Activated CD4-positive, alpha-beta T cell treated with anti-CD3 and anti-CD28 coated beads, Interleukin-2, amount 10 ng/mL, durations not matched to agents 24 days and 14 days (primary cell): ENCODE measurements at regions of chr5 and their contacts with region 1.

Region 1: GRCh38 chr5:135887351-135887864 is 8.2 kb downstream of the IL9 start:
- DNase-seq: peak; percentile 89
- H3K4me3 Mint-ChIP-seq: no peak overlapping the region
- H3K27ac Mint-ChIP-seq: no peak overlapping the region
- H3K4me1 Mint-ChIP-seq: peaks cover 5% of the 10 kb centered on the region
- H3K27me3 Mint-ChIP-seq: peaks cover 18% of the 10 kb centered on the region

Region 2: DNA sequence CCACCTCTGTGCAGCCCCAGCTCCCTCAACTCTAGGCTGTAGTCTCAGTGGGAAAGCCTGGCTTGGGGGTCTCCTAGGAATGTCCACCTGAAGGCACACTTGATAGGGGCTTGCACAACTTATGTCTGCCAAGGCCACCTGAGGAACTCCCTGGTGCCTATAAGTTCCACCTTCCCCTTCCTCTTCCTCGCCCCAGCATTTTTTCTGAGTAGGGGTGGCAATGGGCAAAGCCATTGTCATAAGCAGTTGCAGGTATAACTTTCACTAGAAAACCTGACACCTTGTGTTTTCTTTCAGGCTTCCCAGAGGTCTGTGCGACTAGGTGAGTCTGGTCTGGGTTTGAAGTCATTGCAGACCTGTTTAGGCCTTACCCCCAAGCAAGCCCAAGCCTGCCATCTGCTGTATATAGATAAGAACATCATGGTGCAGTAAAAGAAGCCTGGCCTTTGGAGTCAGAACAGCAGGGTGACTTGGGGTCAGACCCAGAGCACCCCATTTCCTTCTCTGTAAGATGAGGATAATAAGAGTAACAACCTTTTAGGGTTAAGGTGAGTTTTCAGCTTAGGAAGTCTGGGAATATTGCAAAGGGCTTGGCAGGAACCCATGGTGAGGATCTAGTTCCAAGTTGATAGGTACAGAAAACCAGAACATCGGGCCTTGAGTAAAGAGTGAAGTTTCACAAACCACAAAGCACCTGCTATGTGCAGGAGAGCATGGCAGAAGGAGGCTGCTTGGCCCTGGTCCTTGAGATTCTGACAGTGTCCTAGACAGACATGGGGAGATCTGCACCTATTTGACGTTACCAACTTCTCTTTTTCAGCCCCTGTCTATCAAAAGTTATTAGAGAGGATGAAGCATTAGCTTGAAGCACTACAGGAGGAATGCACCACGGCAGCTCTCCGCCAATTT is 175.2 kb after region 1 on chr5:
- intact Hi-C with region 1: loop called (anchors 1 kb)
- DNase-seq: peak; percentile 60
- H3K4me3 Mint-ChIP-seq: no peak overlapping the region
- H3K27ac Mint-ChIP-seq: no peak overlapping the region
- H3K4me1 Mint-ChIP-seq: no peaks in the 10 kb centered on the region
- H3K27me3 Mint-ChIP-seq: peaks cover 4% of the 10 kb centered on the region

Region 3: DNA sequence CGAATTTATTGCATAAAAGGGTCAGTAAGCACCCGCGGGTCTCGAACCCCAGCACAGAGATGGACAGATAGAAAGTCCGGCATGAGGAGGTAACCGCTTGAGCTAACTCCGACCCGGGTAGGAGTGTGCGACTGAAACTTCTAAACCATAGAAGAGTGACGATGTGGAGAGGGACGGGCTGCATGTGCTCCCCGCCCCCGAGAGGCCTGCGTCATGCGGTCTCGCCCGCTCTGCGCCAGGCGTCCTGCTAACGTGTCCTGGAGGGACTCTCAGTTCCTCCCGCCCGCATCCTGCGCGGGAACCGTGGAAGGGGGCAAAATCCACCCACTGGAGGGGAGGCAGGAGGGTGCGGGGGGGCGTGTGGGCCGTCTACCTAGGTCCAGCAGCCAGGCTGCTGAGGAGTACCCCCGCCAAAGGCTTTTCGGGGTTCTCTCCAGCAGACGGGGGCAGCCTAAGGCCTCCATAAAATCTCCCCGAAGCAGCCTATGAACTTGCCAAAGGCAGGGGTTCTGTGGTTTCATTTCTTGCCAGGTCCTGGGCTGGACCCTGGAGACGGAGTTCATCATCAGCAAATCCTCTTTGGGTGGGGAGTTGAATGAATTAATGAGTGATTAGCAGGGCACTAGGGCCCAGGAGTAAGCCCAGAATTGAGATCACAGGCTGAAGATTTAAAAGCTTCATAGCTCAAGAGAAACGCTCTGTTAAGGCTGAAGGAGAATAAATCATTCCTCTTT is 193.2 kb after region 1 on chr5:
- intact Hi-C with region 1: loop called (anchors 1 kb)
- DNase-seq: peak; percentile 92
- H3K4me3 Mint-ChIP-seq: peak overlapping the region; percentile 78
- H3K27ac Mint-ChIP-seq: peak overlapping the region; percentile 83
- H3K4me1 Mint-ChIP-seq: peaks cover 12% of the 10 kb centered on the region
- H3K27me3 Mint-ChIP-seq: peaks cover 55% of the 10 kb centered on the region

Region 4: GRCh38 chr5:136174021-136174659 is 286.7 kb after region 1 on chr5:
- intact Hi-C with region 1: loop called (anchors 2 kb)
- DNase-seq: no peak
- H3K4me3 Mint-ChIP-seq: no peak overlapping the region
- H3K27ac Mint-ChIP-seq: no peak overlapping the region
- H3K4me1 Mint-ChIP-seq: no peaks in the 10 kb centered on the region
- H3K27me3 Mint-ChIP-seq: no peaks in the 10 kb centered on the region

Region 5: DNA sequence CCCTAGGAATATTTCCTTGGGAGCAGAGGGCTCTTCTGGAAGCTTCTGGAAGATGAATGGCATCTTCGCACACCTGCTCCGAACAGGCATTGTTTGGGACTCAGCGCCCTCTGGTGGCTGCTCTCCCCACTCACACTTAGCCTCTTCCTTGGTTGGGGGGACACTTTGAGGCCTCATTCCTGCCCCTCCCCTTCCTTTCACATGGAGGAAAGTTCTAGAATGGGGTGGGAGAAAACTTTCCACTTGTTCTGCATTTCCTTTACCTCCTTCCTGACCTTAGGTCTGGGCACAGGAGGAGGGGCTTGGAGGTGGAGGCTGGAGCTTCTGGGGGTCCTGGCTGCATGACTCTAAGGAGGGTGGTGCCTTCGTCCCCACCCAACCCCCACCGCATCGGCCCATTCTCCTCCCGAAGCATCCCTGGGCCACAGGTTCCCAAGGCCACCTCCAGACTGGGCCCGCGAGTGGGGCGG is 324.9 kb after region 1 on chr5:
- intact Hi-C with region 1: loop called (anchors 1 kb)
- DNase-seq: peak; percentile 83
- H3K4me3 Mint-ChIP-seq: no peak overlapping the region
- H3K27ac Mint-ChIP-seq: no peak overlapping the region
- H3K4me1 Mint-ChIP-seq: peaks cover 2% of the 10 kb centered on the region
- H3K27me3 Mint-ChIP-seq: peaks cover 4% of the 10 kb centered on the region

Region 6: DNA sequence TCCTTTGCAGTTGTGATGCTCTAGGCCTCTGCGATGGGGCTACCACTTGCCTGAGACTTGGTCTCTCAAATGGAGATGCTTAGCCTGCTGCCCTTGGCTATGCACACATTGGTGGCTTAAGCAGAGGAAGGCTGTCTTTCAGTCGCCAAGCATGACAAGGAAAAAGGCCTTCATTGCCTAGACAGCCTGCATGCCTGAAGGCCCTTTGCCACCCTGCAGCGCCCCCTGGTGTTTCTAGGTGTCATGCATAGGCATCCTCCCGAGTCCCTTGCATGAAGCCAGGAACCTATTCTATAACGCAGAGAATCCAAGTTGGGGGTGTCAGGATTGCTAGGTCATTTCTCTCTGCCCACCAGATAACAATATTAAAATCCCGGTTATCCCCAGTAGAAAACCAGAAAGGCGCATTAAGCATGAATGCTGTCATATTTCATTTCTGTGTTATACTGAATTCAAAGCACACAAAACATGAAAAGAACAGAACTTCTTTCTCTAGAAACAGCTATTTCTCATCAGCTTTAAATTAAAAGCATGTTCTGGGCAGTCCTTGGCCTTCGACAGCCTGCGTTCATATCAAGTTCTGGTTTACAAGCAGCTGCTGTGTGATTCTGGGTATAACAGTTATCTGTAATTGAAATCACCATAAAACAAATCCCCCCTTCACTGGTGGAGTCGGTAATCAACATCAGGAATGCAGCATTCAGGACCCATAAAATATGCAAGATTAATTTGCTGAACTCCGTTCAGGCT is 537.6 kb after region 1 on chr5:
- intact Hi-C with region 1: loop called (anchors 10 kb)
- DNase-seq: peak; percentile 84
- H3K4me3 Mint-ChIP-seq: no peak overlapping the region
- H3K27ac Mint-ChIP-seq: no peak overlapping the region
- H3K4me1 Mint-ChIP-seq: no peaks in the 10 kb centered on the region
- H3K27me3 Mint-ChIP-seq: no peaks in the 10 kb centered on the region